ENCODE measurements at regions of chr1 and their contacts with region 1.

Region 1: DNA sequence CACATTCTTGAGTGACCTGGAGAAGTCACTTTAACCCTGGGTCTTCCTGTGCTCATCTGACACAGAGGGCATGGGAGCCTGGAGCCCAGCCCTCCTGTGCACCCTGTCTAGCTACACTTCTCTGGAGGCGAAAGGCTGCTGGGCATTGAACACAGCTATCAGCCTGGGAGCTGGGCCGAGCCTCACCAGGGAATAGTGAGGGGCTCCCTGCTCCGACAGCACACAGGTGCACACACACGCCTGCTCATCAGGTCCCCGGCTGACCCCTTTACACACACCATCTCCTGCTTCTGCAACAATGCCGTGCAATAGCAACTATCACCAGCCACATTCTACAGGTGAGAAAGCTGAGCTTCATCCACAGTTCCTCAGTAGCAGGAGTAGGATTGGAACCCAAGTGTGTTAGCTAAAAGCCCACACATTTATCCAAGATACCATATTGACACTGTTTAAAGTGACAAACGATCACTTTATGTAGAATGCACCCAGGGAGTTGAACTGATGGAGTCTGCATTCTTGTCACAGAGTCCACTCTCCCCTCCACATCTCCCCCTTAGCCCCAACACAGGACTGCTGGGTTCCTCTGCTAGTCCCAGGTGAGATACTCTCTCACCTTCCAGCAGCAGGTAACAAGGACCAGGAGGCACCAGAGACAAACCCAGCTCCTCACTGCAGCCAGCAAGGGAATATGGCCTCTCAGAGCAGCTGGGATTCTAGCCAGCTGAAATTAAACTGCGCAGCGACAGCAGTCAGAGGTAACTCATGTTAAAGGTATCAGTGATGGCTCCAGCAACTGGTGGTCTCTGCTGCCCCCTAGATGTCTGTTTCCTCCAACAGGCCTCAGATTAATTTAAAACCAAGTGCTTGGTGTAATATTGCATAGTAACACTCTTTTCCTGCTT is 18.3 kb upstream of the CAPN8 start:
- DNase-seq: peak; percentile 64
- H3K4me3 Mint-ChIP-seq: no peak overlapping the region
- H3K27ac Mint-ChIP-seq: no peak overlapping the region
- H3K4me1 Mint-ChIP-seq: no peaks in the 10 kb centered on the region
- H3K27me3 Mint-ChIP-seq: peaks cover 2% of the 10 kb centered on the region

Region 2: DNA sequence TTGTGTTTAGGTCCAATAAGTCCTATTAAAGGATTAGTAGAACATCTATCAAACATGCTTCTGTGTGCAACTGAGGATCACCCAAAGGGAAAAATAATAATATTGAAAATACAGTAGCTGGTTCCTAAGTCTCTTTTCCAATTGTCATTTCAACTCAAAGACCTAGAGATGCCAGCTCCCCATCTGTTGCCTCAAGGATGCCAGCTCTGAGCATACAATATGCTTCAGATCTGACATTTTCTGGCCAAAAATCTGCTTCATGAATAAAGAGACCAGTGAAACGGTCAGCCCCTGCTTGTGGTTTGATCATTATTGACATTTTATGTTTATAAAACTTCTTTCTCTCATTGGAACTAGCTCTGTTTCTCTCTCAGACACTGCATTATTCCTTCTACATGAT is 217.7 kb before region 1 on chr1:
- CTCF ChIA-PET with region 1: no interaction called
- POLR2A ChIA-PET with region 1: no interaction called
- intact Hi-C with region 1: no loop called
- DNase-seq: no peak
- H3K4me3 Mint-ChIP-seq: no peak overlapping the region
- H3K27ac Mint-ChIP-seq: no peak overlapping the region
- H3K4me1 Mint-ChIP-seq: no peaks in the 10 kb centered on the region
- H3K27me3 Mint-ChIP-seq: no peaks in the 10 kb centered on the region

Region 3: GRCh38 chr1:223531742-223532341 is 152.0 kb before region 1 on chr1:
- CTCF ChIA-PET with region 1: interaction called, 9 read pairs
- POLR2A ChIA-PET with region 1: no interaction called
- intact Hi-C with region 1: loop called (anchors 5 kb)
- DNase-seq: peak; percentile 76
- H3K4me3 Mint-ChIP-seq: no peak overlapping the region
- H3K27ac Mint-ChIP-seq: no peak overlapping the region
- H3K4me1 Mint-ChIP-seq: peaks cover 5% of the 10 kb centered on the region
- H3K27me3 Mint-ChIP-seq: peaks cover 2% of the 10 kb centered on the region

Region 4: DNA sequence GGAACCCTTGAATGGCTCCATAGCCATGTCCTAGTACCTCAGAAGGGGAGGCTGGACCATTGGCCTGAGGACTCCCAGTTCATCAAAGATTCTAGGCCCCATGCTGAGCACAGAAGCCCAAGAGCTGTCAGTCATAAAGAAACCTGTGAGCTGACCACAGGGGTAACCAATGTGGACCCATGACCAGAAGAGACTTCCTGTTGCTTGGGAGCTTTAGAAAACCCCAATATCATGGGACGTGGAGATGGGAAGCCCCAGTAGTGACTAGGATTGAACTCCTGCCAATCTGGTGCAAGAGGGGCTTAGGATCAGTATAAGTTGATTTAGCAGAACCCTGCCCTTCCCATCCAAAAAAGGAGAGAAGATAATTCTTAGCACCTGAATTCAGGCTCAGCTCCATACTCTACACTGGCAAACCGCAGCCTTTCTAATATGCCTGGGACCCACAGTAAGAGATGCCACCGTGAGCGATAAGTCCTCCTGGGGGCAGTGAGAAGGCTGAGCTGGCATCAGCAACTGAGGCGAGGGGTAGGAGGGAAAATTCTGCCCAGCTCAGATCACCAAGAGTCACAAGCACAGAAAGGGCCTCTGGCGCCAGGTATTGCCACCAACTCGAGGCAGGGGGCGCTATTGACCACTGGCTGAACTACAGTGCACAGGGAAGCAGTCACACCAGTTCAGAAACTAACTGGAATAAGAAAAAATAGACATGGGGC is 127.3 kb before region 1 on chr1:
- CTCF ChIA-PET with region 1: interaction called, 10 read pairs
- POLR2A ChIA-PET with region 1: no interaction called
- intact Hi-C with region 1: no loop called
- DNase-seq: peak; percentile 75
- H3K4me3 Mint-ChIP-seq: no peak overlapping the region
- H3K27ac Mint-ChIP-seq: no peak overlapping the region
- H3K4me1 Mint-ChIP-seq: no peaks in the 10 kb centered on the region
- H3K27me3 Mint-ChIP-seq: no peaks in the 10 kb centered on the region

Region 5: DNA sequence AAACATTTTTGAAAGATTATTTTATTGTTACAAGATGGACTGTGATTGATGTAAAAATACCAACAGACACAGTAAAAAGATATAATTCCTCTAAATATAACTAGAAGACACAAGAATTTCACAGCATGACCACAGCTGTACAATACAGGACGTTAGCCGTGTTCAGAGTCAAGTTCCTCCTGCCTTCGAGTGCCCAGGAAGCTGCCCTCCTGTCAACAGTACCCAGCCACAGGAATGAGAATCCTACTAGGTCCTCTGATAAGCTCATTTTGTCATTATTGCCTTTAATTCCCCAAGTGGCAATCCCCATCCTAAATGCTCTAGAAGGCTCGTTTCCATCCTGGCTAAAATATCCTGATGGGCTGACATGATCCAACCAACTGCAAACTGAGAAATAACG is 12.1 kb after region 1 on chr1:
- CTCF ChIA-PET with region 1: interaction called, 17 read pairs
- POLR2A ChIA-PET with region 1: no interaction called
- intact Hi-C with region 1: no loop called
- DNase-seq: no peak
- H3K4me3 Mint-ChIP-seq: no peak overlapping the region
- H3K27ac Mint-ChIP-seq: no peak overlapping the region
- H3K4me1 Mint-ChIP-seq: peaks cover 9% of the 10 kb centered on the region
- H3K27me3 Mint-ChIP-seq: peaks cover 4% of the 10 kb centered on the region